ENCODE measurements at regions of chr1 and their contacts with region 1.

Region 1: DNA sequence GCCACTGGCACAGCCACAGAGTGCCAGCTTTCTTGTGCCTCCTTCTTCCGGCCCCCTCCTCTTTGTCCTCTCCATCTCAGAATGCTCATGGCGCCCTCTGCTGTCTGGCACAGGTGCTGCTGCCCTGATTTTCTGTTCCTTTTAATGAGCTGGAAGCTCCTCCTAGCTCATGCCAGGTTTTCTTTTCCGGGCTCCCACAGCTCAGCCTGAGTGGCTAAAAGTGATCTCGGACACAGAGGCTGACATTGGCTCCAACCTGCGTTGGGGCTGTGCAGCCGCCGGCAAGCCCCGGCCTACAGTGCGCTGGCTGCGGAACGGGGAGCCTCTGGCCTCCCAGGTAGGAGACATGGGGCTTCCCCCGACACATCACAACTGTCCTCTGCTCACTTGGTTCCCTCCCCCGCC is 18.7 kb downstream of the CNTN2 start:
- DNase-seq: peak; percentile 48 to 76 (median 71)
- ATAC-seq: peak; percentile 86
- H3K4me3 ChIP-seq: no peak overlapping the region
- H3K4me3 Mint-ChIP-seq: no peak overlapping the region
- H3K27ac ChIP-seq: no peak overlapping the region
- H3K27ac Mint-ChIP-seq: no peak overlapping the region
- H3K4me1 ChIP-seq: no peaks in the 10 kb centered on the region
- H3K4me1 Mint-ChIP-seq: peaks cover 2% of the 10 kb centered on the region
- H3K27me3 ChIP-seq: no peaks in the 10 kb centered on the region
- H3K27me3 Mint-ChIP-seq: no peaks in the 10 kb centered on the region
- CTCF ChIP-seq: peak; percentile 74

Region 2: GRCh38 chr1:204989266-204990058 is 72.2 kb before region 1 on chr1:
- CTCF ChIA-PET with region 1: interaction called, 25 read pairs
- POLR2A ChIA-PET with region 1: no interaction called
- intact Hi-C with region 1: loop called in 1 of 2 experiments (anchors 1 kb)
- DNase-seq: peak; percentile 10 to 67 (median 46)
- ATAC-seq: peak; percentile 87
- H3K4me3 ChIP-seq: no peak overlapping the region
- H3K4me3 Mint-ChIP-seq: no peak overlapping the region
- H3K27ac ChIP-seq: no peak overlapping the region
- H3K27ac Mint-ChIP-seq: no peak overlapping the region
- H3K4me1 ChIP-seq: peaks cover 4% of the 10 kb centered on the region
- H3K4me1 Mint-ChIP-seq: peaks cover 15% of the 10 kb centered on the region
- H3K27me3 ChIP-seq: no peaks in the 10 kb centered on the region
- H3K27me3 Mint-ChIP-seq: no peaks in the 10 kb centered on the region
- CTCF ChIP-seq: peak; percentile 63

Region 3: GRCh38 chr1:205041998-205042910 is 19.4 kb before region 1 on chr1:
- CTCF ChIA-PET with region 1: interaction called, 10 read pairs
- POLR2A ChIA-PET with region 1: no interaction called
- intact Hi-C with region 1: no loop called
- DNase-seq: no peak
- ATAC-seq: no peak
- H3K4me3 ChIP-seq: no peak overlapping the region
- H3K4me3 Mint-ChIP-seq: no peak overlapping the region
- H3K27ac ChIP-seq: no peak overlapping the region
- H3K27ac Mint-ChIP-seq: no peak overlapping the region
- H3K4me1 ChIP-seq: no peaks in the 10 kb centered on the region
- H3K4me1 Mint-ChIP-seq: no peaks in the 10 kb centered on the region
- H3K27me3 ChIP-seq: peaks cover 3 to 9% of the 10 kb centered on the region in 2 experiments
- H3K27me3 Mint-ChIP-seq: peaks cover 53% of the 10 kb centered on the region
- CTCF ChIP-seq: no peak

Region 4: DNA sequence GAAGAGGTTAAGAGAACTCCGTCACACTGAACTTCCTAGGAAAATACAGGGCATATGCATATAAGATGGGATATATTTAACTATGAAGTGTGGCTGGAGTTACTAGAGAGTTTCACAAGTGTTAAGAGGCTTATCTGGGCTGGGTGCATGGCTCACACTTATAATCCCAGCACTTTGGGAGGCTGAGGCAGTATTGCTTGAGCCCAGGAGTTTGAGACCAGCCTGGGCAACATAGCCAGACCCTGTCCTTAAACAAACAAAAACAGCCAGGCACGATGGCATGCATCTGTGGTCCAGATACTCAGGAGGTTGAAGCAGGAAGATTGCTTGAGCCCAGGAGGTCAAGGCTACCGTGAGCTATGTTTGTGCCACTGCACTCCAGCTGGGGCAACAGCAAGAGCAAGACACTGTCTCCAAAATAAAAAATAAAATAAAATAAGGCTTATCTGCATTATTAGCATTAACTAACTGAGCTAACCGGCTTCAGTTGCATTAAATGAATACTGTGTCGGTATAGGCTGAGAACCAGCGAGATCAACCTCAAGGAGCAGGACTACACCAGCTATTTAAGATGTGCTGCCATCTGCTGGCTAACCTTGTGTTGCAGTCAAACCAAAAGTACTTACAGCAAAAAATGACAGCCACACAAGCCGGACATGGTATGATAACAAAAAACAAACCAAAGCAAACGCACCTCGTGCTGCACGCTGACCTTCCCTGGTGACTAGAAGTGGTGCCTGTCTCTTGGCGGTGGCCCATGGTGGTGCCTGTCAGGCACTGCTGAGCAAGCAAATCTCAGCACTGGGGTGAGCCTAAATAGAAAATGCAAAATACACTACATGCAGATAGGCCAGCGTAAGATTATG is 79.8 kb after region 1 on chr1:
- CTCF ChIA-PET with region 1: no interaction called
- POLR2A ChIA-PET with region 1: no interaction called
- intact Hi-C with region 1: no loop called
- DNase-seq: peak; percentile 48 to 86 (median 77)
- ATAC-seq: peak; percentile 91
- H3K4me3 ChIP-seq: no peak overlapping the region
- H3K4me3 Mint-ChIP-seq: no peak overlapping the region
- H3K27ac ChIP-seq: no peak overlapping the region
- H3K27ac Mint-ChIP-seq: peak overlapping the region; percentile 3
- H3K4me1 ChIP-seq: peaks cover 4% of the 10 kb centered on the region
- H3K4me1 Mint-ChIP-seq: peaks cover 9% of the 10 kb centered on the region
- H3K27me3 ChIP-seq: no peaks in the 10 kb centered on the region
- H3K27me3 Mint-ChIP-seq: no peaks in the 10 kb centered on the region
- CTCF ChIP-seq: peak; percentile 81

Measured in CD8-positive, alpha-beta T cell (primary cell).